ENCODE measurements at regions of chr6 and their contacts with region 1.

Region 1: GRCh38 chr6:97059473-97059872 is 134.9 kb downstream of the KLHL32 start:
- DNase-seq: no peak
- H3K4me3 ChIP-seq: no peak overlapping the region
- H3K27ac ChIP-seq: no peak overlapping the region
- H3K4me1 ChIP-seq: no peaks in the 10 kb centered on the region
- H3K27me3 ChIP-seq: no peaks in the 10 kb centered on the region
- CTCF ChIP-seq: peak; percentile 12 to 62 (median 42)
- POLR2A ChIP-seq: no peak

Region 2: DNA sequence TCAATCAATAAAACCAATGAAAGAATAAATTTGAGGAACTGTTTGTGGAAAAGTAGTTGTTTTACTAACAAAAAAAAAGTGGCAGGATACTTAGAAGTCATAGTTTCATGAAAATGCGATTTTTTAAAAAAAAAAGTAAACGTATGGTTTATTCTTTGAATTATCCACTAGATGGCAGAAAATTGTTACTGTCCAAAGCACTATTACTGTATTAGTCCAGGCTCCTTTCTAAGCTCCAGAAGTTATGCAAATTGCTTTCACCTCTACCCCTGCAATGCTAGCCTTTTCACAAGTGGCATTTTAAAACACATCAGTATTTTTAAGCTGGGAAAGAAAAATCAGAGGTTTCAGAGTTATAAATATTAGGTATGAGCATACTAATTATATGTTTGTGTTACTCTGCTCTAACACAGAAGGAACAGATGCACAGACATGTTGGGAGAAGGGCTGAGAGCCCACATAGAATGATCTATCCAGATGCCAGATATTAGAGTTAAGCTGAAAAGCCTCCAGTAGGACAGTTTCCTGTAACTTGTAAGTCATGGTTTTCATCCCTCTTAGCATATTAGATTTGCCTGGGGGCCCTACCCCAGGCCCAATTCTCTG is 432.6 kb before region 1 on chr6:
- intact Hi-C with region 1: loop called (anchors 5 kb)
- DNase-seq: no peak
- H3K4me3 ChIP-seq: no peak overlapping the region
- H3K27ac ChIP-seq: no peak overlapping the region
- H3K4me1 ChIP-seq: no peaks in the 10 kb centered on the region
- H3K27me3 ChIP-seq: no peaks in the 10 kb centered on the region
- CTCF ChIP-seq: peak in 3 of 4 experiments; percentile 33 to 61 (median 41)
- POLR2A ChIP-seq: no peak

Region 3: DNA sequence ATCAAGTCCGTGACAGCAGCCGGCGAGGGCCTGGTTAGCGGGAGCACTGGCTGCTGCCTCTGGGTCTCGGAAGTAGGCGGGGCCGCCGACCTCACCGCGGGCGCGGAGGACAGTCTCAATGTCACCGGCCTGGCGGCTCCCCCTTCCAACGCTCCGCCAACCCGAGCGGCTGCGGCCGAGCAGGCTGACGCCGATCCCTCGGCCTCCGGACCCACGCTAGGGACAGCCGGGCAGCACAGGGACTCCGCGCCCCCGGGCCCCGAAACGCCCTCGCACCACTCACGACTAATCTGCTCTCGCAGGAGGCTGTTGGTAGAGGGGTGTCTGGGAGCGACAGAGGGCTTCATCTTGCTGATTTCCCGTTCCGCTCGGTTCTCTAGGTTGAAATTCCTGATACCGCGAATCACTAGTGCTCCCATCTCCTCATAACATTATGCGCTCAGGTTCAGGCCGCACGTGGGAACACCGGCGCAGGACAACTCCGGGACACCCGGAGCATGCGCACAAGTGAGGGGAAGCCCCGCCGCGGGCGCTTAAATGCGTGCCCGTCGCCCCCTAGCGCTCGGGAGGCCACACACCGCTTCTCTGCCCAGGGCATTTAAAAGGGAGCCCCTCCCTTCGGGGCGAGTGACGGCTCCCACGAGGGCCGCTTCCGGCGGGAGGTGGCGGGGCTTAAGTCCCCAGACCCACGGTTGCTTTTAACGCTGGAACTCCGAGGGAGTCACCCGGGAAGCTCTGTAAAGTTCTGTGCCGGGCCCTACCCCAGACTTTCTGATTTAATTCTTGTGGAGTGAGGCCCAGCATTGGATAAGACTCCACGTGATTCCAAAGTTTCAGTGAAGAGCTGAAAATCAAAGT is 161.9 kb before region 1 on chr6 and contains the start of gene NDUFAF4:
- intact Hi-C with region 1: loop called (anchors 1 kb)
- DNase-seq: peak; percentile 95
- H3K4me3 ChIP-seq: peak within 1 kb of the TSS; percentile 78 to 80
- H3K27ac ChIP-seq: peak within 1 kb of the TSS; percentile 67 to 82
- H3K4me1 ChIP-seq: peaks cover 5% of the 10 kb centered on the region
- H3K27me3 ChIP-seq: no peaks in the 10 kb centered on the region
- CTCF ChIP-seq: peak; percentile 75 to 98 (median 96)
- POLR2A ChIP-seq: no peak
- total RNA-seq, gene NDUFAF4: 15.6 to 29.9 TPM